ENCODE measurements at regions of chr10 and their contacts with region 1.

Region 1: GRCh38 chr10:11611248-11612020 is at the start of gene USP6NL:
- DNase-seq: peak; percentile 23 to 83 (median 54)
- ATAC-seq: peak; percentile 56
- H3K4me3 ChIP-seq: peak within 1 kb of the TSS; percentile 76
- H3K4me3 Mint-ChIP-seq: peak within 1 kb of the TSS; percentile 99
- H3K27ac ChIP-seq: peak within 1 kb of the TSS in 1 of 2 donors; percentile 15
- H3K27ac Mint-ChIP-seq: peak within 1 kb of the TSS; percentile 89
- H3K4me1 ChIP-seq: peaks cover 14% of the 10 kb centered on the region
- H3K4me1 Mint-ChIP-seq: peaks cover 50% of the 10 kb centered on the region
- H3K27me3 ChIP-seq: no peaks in the 10 kb centered on the region
- H3K27me3 Mint-ChIP-seq: no peaks in the 10 kb centered on the region
- CTCF ChIP-seq: no peak
- total RNA-seq, gene USP6NL: 5.2 to 5.6 TPM

Region 2: GRCh38 chr10:11533328-11533781 is 78.1 kb before region 1 on chr10:
- CTCF ChIA-PET with region 1: no interaction called
- POLR2A ChIA-PET with region 1: no interaction called
- intact Hi-C with region 1: loop called in 1 of 2 experiments (anchors 2 kb)
- DNase-seq: no peak
- ATAC-seq: peak; percentile 24
- H3K4me3 ChIP-seq: no peak overlapping the region
- H3K4me3 Mint-ChIP-seq: no peak overlapping the region
- H3K27ac ChIP-seq: no peak overlapping the region
- H3K27ac Mint-ChIP-seq: no peak overlapping the region
- H3K4me1 ChIP-seq: peaks cover 3% of the 10 kb centered on the region
- H3K4me1 Mint-ChIP-seq: peaks cover 35% of the 10 kb centered on the region
- H3K27me3 ChIP-seq: no peaks in the 10 kb centered on the region
- H3K27me3 Mint-ChIP-seq: no peaks in the 10 kb centered on the region
- CTCF ChIP-seq: no peak

Region 3: GRCh38 chr10:11551916-11552602 is 59.4 kb before region 1 on chr10:
- CTCF ChIA-PET with region 1: no interaction called
- POLR2A ChIA-PET with region 1: no interaction called
- intact Hi-C with region 1: no loop called
- DNase-seq: peak in 2 of 14 experiments; percentile 46 to 54
- ATAC-seq: no peak
- H3K4me3 ChIP-seq: no peak overlapping the region
- H3K4me3 Mint-ChIP-seq: no peak overlapping the region
- H3K27ac ChIP-seq: no peak overlapping the region
- H3K27ac Mint-ChIP-seq: no peak overlapping the region
- H3K4me1 ChIP-seq: no peaks in the 10 kb centered on the region
- H3K4me1 Mint-ChIP-seq: peaks cover 9% of the 10 kb centered on the region
- H3K27me3 ChIP-seq: no peaks in the 10 kb centered on the region
- H3K27me3 Mint-ChIP-seq: no peaks in the 10 kb centered on the region
- CTCF ChIP-seq: no peak

Region 4: DNA sequence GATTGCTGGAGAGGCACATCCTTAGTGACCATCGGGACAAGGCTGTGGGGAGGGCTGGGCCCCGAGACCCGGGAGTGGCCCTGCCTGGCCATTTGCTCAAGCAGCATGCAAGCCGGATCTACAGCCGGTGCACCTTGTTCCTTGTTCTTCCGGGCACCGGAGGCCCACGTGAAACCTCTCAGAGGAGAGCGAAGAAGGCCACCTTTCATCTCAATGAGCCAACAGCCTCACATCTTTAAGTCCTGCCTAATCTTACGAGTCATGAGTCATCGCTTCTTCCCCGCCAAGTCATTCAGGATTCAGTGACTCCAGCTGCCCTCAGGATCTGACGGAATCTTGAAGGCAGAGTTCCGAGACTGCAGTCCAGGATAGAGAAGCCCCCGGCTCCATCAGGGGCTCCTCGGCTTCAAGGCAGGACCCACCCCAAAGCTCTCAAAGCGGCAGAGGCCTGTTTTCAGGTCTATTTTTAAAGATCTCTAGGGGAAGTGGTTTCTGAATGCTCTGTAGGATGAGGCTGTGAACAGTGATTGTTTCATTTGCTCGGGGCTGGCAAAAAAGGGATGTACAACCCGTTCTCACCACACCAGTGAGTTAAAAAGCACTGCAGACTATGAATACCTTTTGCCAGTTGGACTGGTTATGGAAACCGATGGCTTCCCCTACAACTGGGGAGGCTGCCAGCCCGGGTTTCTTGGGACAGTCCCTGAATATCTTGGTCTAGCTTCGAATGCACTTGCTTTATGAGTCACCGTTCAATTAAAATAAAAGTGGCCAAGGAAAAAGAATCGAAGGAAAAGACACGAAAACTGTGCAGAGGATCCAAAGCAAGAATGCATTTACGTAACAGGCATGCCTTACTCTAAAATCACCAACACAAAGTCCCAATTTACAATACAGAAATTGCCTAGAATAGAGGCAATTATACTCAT is 73.5 kb after region 1 on chr10:
- CTCF ChIA-PET with region 1: no interaction called
- POLR2A ChIA-PET with region 1: interaction called, 19 read pairs
- intact Hi-C with region 1: loop called (anchors 1 to 5 kb)
- DNase-seq: peak; percentile 38 to 84 (median 62)
- ATAC-seq: peak; percentile 86
- H3K4me3 ChIP-seq: peak overlapping the region; percentile 51
- H3K4me3 Mint-ChIP-seq: peak overlapping the region; percentile 87
- H3K27ac ChIP-seq: peak overlapping the region; percentile 86 to 88
- H3K27ac Mint-ChIP-seq: peak overlapping the region; percentile 98
- H3K4me1 ChIP-seq: peaks cover 51% of the 10 kb centered on the region
- H3K4me1 Mint-ChIP-seq: peaks cover 73% of the 10 kb centered on the region
- H3K27me3 ChIP-seq: no peaks in the 10 kb centered on the region
- H3K27me3 Mint-ChIP-seq: no peaks in the 10 kb centered on the region
- CTCF ChIP-seq: no peak

Region 5: GRCh38 chr10:11724938-11725776 is 113.7 kb after region 1 on chr10:
- CTCF ChIA-PET with region 1: no interaction called
- POLR2A ChIA-PET with region 1: no interaction called
- intact Hi-C with region 1: loop called in 1 of 2 experiments (anchors 10 kb)
- DNase-seq: peak in 4 of 14 experiments; percentile 18 to 70 (median 52)
- ATAC-seq: peak; percentile 80
- H3K4me3 ChIP-seq: no peak overlapping the region
- H3K4me3 Mint-ChIP-seq: no peak overlapping the region
- H3K27ac ChIP-seq: no peak overlapping the region
- H3K27ac Mint-ChIP-seq: no peak overlapping the region
- H3K4me1 ChIP-seq: no peaks in the 10 kb centered on the region
- H3K4me1 Mint-ChIP-seq: peaks cover 6% of the 10 kb centered on the region
- H3K27me3 ChIP-seq: no peaks in the 10 kb centered on the region
- H3K27me3 Mint-ChIP-seq: no peaks in the 10 kb centered on the region
- CTCF ChIP-seq: peak; percentile 69

Region 6: DNA sequence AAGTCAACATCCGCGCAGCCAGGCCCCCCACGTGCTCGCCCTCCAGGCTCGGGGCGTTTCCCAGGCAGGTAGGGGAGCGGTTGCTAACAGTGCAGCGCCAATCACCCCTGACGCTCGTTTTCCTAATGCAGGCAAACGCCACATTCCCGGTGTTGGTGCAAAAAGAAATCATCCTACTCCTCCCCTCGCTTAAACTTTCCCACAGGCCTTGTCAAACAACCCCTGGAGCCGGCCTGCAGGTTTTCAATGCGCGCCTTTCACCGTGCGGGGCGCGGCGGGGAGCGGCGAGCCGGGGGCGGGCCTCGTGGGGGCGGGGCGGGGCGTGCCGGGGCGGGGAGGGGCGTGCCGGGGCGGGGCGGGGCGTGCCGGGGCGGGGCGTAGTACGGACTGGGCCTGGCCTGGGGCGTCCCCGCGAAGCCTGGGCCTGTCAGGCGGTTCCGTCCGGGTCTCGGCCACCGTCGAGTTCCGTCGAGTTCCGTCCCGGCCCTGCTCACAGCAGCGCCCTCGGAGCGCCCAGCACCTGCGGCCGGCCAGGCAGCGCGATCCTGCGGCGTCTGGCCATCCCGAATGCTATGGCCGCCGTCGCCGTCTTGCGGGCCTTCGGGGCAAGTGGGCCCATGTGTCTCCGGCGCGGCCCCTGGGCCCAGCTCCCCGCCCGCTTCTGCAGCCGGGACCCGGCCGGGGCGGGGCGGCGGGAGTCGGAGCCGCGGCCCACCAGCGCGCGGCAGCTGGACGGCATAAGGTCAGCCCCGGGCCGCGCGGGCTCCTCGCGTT is 130.8 kb after region 1 on chr10 and contains the start of gene ECHDC3:
- CTCF ChIA-PET with region 1: no interaction called
- POLR2A ChIA-PET with region 1: no interaction called
- intact Hi-C with region 1: loop called in 1 of 2 experiments (anchors 5 kb)
- DNase-seq: peak in 13 of 14 experiments; percentile 11 to 75 (median 41)
- ATAC-seq: peak; percentile 84
- H3K4me3 ChIP-seq: peak within 1 kb of the TSS; percentile 56
- H3K4me3 Mint-ChIP-seq: peak within 1 kb of the TSS; percentile 67
- H3K27ac ChIP-seq: no peak within 1 kb of the TSS
- H3K27ac Mint-ChIP-seq: peak within 1 kb of the TSS; percentile 22
- H3K4me1 ChIP-seq: peaks cover 18% of the 10 kb centered on the region
- H3K4me1 Mint-ChIP-seq: peaks cover 18% of the 10 kb centered on the region
- H3K27me3 ChIP-seq: peaks cover 0 to 13% of the 10 kb centered on the region in 2 experiments
- H3K27me3 Mint-ChIP-seq: peaks cover 22% of the 10 kb centered on the region
- CTCF ChIP-seq: no peak
- total RNA-seq, gene ECHDC3: 1.5 to 1.6 TPM

Measured in CD4-positive, alpha-beta T cell (primary cell).